ENCODE measurements at regions of chr10 and their contacts with region 1.

Region 1: DNA sequence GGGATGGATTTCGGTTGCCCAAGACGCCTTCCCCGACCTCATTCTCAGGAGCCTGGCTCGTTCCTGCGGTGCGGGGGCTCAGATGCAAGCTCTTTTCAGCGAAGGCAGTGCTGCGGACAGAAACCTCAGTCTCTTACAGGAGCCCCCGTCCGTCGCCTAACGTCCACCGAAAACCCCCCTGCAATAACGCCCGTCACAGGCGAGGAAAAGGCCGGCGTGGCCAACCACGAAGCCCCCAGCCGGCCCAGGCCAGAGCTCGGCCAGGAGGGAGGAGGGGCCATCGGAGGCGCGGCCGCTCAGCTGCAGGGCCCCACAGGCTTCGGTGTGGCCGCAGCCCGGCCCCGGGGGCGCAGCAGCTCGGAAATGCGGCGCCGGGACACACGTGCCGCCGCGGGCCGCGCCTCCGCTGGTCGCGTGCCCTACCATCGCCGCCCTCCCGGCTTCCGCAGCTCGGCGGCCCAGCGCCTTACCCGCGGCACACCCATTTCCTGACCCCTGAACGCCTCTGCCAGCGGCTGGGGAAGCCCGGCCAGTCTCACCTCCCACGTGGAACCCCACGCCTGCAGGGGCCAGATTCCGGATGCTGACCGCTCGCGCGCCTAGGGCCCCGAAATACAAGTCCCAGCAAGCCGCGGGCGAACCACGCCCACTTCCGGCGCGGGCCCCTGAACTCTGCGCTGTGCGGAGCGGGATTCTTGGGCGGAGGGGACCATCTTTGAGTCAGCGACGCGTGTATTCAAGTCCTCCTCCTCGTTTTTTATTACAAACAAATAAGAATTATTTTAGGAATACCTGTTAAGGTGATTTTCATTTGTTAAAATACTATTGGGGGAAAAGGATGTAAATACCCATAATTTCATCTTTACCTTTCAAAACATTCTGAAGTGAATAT is at the start of gene ZNF239:
- DNase-seq: peak; percentile 90
- H3K4me3 Mint-ChIP-seq: peak within 1 kb of the TSS; percentile 77
- H3K27ac Mint-ChIP-seq: peak within 1 kb of the TSS; percentile 79
- H3K4me1 Mint-ChIP-seq: peaks cover 56% of the 10 kb centered on the region
- H3K27me3 Mint-ChIP-seq: no peaks in the 10 kb centered on the region
- total RNA-seq, gene ZNF239: 2.0 to 2.5 TPM

Region 2: DNA sequence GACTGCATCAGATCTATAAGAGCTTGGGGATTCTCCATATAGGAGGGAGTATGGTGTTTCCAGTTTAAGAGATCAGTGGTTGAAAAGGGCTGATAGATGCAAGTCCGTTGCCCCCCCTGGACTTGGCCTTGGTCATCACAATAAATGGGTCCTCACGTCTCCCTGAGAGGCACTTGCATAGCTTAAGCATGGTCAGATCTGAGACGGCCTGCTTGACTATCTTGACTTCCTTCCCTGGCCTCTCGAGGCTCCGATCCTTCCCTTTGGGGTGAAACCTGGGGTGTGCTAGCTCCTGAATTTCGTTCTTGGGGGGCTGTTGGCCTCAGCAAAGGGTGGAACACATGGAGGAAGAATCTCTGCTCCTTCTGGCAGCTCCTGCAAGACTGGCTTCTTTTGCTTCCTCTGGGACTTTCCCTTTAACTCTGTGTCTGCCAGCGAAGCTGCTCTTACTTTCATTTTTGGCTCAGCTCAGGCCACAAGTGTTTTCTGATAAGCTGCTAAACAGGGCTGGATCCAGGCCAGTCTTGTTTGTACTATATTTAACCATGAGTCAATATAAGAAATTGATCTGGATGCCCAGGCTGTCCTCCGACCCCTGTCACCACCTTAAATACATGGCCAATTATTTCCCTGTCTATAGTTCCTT is 20.8 kb after region 1 on chr10:
- CTCF ChIA-PET with region 1: no interaction called
- intact Hi-C with region 1: loop called (anchors 1 kb)
- DNase-seq: peak; percentile 66
- H3K4me3 Mint-ChIP-seq: peak overlapping the region; percentile 53
- H3K27ac Mint-ChIP-seq: peak overlapping the region; percentile 75
- H3K4me1 Mint-ChIP-seq: peaks cover 22% of the 10 kb centered on the region
- H3K27me3 Mint-ChIP-seq: no peaks in the 10 kb centered on the region

Region 3: DNA sequence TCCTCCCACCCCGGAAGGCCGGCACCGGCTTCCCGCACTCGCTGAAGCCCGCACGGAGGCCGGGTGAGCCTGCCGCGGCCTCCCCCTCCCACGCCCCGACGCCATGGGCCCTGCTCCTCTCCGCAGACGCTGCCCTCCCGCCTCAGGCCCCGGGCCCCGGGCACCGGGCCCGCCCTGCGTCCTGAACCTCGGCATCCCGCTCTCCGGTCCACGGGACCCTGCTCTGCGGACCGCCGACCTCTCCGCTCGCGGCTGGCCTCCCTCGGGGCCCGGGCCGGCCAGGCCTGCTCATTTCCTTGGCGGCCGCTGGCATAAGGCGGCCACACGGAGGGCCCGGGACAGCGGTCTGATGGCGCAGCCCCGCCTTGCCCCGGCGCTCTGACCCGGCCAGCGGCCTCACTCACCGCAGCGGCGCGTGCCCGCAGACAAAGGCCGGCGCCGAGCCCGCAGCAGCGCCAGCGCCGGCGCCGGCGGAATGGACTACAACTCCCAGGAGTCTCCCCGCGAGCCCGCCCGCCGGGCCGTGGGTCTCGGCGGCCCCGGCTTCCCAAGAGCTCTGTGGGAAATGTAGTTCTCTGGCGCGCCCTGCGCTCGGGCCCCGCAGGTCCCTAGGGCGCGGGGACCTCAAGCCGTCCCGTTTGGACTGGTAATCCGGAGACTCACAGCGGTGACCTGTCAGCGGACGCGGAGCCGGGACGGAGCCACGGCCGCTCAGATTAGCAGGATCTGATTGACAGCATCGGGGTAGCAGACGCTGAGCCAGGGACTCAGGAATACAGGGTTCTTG is 74.3 kb after region 1 on chr10 and contains the start of gene ZNF32:
- CTCF ChIA-PET with region 1: no interaction called
- intact Hi-C with region 1: loop called (anchors 5 kb)
- DNase-seq: peak; percentile 83
- H3K4me3 Mint-ChIP-seq: peak within 1 kb of the TSS; percentile 88
- H3K27ac Mint-ChIP-seq: peak within 1 kb of the TSS; percentile 86
- H3K4me1 Mint-ChIP-seq: peaks cover 18% of the 10 kb centered on the region
- H3K27me3 Mint-ChIP-seq: no peaks in the 10 kb centered on the region
- total RNA-seq, gene ZNF32: 17.8 to 17.9 TPM

Measured in activated naive CD4-positive, alpha-beta T cell treated with anti-CD3 and anti-CD28 coated beads for 36 hours (primary cell).